ENCODE measurements at regions of chr12 and their contacts with region 1.

Region 1: GRCh38 chr12:48988030-48988649 is 10.0 kb downstream of the WNT1 start:
- DNase-seq: peak; percentile 86
- H3K4me3 Mint-ChIP-seq: no peak overlapping the region
- H3K27ac Mint-ChIP-seq: no peak overlapping the region
- H3K4me1 Mint-ChIP-seq: peaks cover 5% of the 10 kb centered on the region
- H3K27me3 Mint-ChIP-seq: peaks cover 24% of the 10 kb centered on the region

Region 2: DNA sequence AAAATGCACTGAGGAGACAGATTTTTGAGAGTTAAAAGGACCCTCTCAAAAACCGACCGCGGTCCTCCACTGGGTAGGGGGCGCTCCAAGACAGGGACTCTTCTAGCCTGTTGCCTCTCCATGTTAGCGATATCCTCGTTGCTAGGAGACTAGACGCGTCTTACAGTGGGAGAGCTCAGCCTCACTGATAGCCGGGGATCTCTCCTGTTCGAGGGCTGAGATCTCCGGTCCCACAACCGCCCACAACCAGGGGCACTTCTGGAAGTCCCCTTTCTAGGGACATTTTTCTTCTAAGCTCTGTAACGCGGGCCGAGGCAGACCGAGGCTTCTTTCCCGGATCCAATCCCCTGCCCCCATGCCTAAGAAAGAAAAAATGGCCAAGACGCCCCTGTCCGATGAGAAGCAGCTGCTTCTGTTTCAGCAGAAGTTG is 84.1 kb before region 1 on chr12:
- CTCF ChIA-PET with region 1: interaction called, 33 read pairs
- POLR2A ChIA-PET with region 1: no interaction called
- intact Hi-C with region 1: no loop called
- DNase-seq: peak; percentile 89
- H3K4me3 Mint-ChIP-seq: peak overlapping the region; percentile 70
- H3K27ac Mint-ChIP-seq: no peak overlapping the region
- H3K4me1 Mint-ChIP-seq: peaks cover 2% of the 10 kb centered on the region
- H3K27me3 Mint-ChIP-seq: no peaks in the 10 kb centered on the region

Region 3: DNA sequence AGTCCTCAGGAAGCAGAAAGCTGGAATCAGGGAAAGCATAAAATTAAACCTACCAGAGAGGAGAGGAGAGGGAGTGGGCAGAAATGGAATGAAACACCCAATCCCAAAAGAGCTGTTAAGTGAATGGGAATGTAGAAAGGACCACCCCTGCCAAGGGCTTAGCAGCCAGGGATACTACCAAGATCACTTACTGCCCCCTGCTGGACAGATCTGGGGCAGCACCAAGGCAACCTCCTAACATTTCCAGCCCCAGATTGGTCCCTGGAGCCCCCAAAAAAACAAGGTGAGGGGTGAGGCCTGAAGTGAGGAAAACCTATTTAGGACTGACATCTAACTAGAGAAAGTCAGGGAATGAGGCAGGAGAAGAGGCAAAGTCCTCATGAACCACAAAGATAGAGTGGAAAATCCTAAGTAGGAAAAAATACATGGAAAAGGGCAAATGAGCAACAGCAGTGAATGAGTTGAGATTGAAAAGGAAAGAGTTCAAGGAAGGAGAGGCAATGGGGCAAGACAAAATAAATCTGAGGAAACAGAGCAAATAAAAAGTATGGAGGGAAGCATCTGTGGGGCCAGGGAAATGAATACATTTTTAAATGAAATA is 51.7 kb before region 1 on chr12:
- CTCF ChIA-PET with region 1: interaction called, 44 read pairs
- POLR2A ChIA-PET with region 1: no interaction called
- intact Hi-C with region 1: no loop called
- DNase-seq: peak; percentile 85
- H3K4me3 Mint-ChIP-seq: no peak overlapping the region
- H3K27ac Mint-ChIP-seq: no peak overlapping the region
- H3K4me1 Mint-ChIP-seq: peaks cover 22% of the 10 kb centered on the region
- H3K27me3 Mint-ChIP-seq: no peaks in the 10 kb centered on the region

Region 4: GRCh38 chr12:48957141-48958048 is 30.7 kb before region 1 on chr12 and contains the start of gene ARF3:
- CTCF ChIA-PET with region 1: interaction called, 202 read pairs
- POLR2A ChIA-PET with region 1: interaction called, 3 read pairs
- intact Hi-C with region 1: no loop called
- DNase-seq: peak; percentile 95
- H3K4me3 Mint-ChIP-seq: peak within 1 kb of the TSS; percentile 86
- H3K27ac Mint-ChIP-seq: peak within 1 kb of the TSS; percentile 83
- H3K4me1 Mint-ChIP-seq: peaks cover 28% of the 10 kb centered on the region
- H3K27me3 Mint-ChIP-seq: no peaks in the 10 kb centered on the region
- total RNA-seq, gene ARF3: 110 to 121 TPM

Region 5: DNA sequence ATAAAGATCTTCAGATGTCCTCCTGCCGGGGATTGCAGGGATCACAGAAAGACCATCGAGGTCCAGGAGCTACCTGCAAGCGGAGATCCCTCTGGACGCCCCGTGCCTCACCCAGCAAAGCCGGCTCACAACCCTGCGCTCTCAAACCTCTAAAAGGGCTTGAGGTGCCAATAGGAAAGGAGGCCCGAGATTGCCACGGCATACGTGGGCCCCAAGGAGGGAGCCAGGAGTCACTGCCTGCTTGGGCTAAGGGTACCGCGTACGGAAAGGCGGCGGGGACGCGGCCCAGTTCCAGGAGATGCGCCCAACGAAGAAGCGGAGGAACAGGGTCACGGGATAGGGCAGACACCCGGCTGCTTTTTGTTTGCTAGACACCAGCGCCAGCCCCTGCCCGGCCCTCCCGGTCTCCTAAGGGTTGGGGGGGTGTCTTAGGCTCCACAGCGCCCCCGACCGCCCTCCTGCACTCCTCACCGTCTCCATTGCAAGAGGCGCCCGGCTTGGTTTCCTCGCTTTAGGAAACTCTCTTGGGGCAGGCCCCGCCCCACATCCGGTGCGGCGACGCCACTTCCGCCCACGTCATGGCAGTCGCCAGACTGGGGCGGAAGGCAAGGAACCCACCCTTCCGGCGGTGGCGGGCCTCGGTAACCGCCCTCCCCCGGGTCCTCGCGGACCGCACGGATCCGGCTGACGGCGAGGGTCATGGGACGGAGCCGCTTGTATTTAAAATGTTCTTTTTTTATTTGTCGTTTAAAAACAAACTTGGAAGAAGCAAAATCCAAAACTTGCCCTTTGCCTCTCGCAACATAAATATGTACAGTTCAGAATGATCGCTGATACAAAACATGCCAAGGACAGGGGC is 30.4 kb after region 1 on chr12 and contains the start of gene PRKAG1:
- CTCF ChIA-PET with region 1: interaction called, 34 read pairs
- POLR2A ChIA-PET with region 1: no interaction called
- intact Hi-C with region 1: no loop called
- DNase-seq: peak; percentile 97
- H3K4me3 Mint-ChIP-seq: peak within 1 kb of the TSS; percentile 95
- H3K27ac Mint-ChIP-seq: peak within 1 kb of the TSS; percentile 92
- H3K4me1 Mint-ChIP-seq: peaks cover 40% of the 10 kb centered on the region
- H3K27me3 Mint-ChIP-seq: no peaks in the 10 kb centered on the region
- total RNA-seq, gene PRKAG1: 52.0 to 55.8 TPM

Region 6: DNA sequence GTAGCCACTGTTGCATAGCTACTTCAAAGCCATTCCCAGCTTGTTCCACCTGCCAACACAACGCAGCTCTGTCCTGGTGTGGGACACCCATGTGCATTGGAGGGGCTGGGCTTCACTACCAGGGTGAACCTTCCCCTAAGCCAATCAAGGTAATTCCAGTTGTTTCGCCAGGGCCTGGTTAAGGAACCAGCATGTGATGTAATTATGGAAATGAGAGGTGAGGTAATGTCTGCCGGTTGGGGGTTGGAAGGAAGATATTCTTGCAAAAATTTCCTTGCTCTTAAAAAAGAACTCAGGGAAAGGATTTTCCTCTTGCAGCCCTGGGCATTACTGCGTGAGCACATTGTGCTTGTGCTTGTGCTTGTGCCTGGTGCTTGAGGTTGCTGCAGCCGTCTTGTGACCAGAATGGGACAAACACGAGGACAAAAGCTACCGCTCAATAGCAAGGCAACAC is 291.6 kb after region 1 on chr12:
- CTCF ChIA-PET with region 1: no interaction called
- POLR2A ChIA-PET with region 1: no interaction called
- intact Hi-C with region 1: no loop called
- DNase-seq: no peak
- H3K4me3 Mint-ChIP-seq: no peak overlapping the region
- H3K27ac Mint-ChIP-seq: no peak overlapping the region
- H3K4me1 Mint-ChIP-seq: no peaks in the 10 kb centered on the region
- H3K27me3 Mint-ChIP-seq: peaks cover 7% of the 10 kb centered on the region